CD8-positive, alpha-beta T cell (primary cell): ENCODE measurements at regions of chr3 and their contacts with region 1.

Region 1: DNA sequence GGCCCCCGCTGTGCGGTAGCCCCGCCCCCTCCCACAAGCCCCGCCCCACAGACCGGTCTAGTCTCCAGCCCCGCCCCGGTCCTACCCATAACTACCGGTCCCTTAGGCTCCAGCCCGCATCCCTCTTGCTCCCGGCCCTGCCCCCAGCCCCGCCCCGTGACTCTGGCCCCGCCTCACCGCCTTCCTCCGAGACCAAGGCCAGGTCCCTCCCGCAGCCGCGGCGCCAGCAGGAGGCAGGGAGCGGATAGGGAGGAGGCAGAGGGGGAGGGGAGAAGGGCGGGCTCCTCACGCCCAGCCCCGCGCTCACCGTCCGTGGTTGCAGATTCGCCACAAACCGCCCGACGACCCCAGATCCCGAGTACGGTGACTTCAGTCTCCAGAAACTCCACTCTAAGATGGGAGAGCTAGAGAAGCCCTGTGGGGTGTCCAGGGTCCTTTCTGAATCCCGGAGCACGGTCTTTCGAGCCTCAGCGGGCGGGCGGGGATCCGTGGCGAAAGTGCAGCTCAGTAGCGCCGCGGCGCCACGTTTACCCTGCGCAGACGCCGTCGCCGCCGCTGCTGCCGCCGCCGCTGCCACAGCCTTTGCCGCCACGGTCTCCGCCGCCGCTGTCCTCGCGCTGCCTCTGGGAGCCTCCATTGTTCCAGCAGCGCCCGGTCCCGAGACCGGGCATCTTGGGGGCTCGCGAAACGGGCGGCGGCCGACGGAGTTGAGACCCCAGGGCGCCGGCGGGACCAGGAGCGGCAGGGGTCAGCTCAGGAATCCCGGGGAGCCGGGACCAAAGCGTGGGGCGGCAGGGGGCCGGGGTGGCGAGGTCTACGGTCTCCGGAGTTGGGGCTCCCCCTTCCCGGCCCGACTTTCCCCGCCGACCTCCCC is at the start of gene BRPF1:
- DNase-seq: peak; percentile 98 to 100 (median 99)
- ATAC-seq: peak; percentile 94
- H3K4me3 ChIP-seq: peak within 1 kb of the TSS; percentile 91 to 92
- H3K4me3 Mint-ChIP-seq: peak within 1 kb of the TSS; percentile 91
- H3K27ac ChIP-seq: peak within 1 kb of the TSS; percentile 83 to 97
- H3K27ac Mint-ChIP-seq: peak within 1 kb of the TSS; percentile 93
- H3K4me1 ChIP-seq: peaks cover 48% of the 10 kb centered on the region
- H3K4me1 Mint-ChIP-seq: peaks cover 66% of the 10 kb centered on the region
- H3K27me3 ChIP-seq: no peaks in the 10 kb centered on the region
- H3K27me3 Mint-ChIP-seq: no peaks in the 10 kb centered on the region
- CTCF ChIP-seq: no peak
- total RNA-seq, gene BRPF1: 22.0 to 25.8 TPM

Region 2: DNA sequence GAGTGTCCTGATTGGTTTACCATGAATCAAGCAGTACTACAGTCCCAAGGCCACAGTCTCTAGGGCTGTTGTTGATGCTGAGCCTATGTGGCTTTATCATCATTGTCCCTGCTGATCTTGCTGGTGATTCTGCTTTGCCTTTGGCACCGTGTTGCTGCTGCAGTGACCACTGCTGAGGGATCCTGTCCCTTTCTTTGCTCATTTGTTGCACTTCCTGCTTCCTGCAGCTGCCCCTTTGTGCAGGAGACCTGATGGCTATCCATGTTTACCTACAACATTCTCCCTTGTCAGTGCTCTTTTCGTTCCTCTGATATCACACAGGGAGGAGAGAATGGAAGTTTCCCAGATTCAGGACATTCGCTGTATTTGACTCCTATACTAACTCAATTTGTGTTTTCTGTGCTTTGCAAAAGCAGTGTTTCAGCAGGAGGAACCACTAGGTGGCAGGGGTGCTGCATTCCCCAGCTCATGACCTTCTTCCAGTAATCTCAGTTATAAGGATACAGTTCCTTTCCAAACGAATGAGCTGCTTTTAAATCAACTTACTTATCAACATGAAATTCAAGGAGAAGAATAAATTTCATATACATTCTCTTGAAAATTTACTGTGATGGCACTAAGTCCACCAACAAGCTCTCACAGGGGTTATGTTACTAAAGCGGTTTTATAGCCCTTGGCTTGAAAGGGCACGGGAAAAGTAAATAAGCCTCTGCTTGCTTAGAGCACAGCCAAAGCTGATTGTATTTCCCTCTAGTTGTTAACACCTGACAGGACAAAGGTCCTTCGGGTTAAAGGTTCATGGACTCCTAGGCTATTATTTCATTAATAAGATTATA is 378.3 kb before region 1 on chr3:
- CTCF ChIA-PET with region 1: interaction called, 4 read pairs
- POLR2A ChIA-PET with region 1: no interaction called
- intact Hi-C with region 1: loop called (anchors 2 to 10 kb)
- DNase-seq: peak; percentile 22 to 77 (median 63)
- ATAC-seq: peak; percentile 88
- H3K4me3 ChIP-seq: no peak overlapping the region
- H3K4me3 Mint-ChIP-seq: no peak overlapping the region
- H3K27ac ChIP-seq: no peak overlapping the region
- H3K27ac Mint-ChIP-seq: no peak overlapping the region
- H3K4me1 ChIP-seq: no peaks in the 10 kb centered on the region
- H3K4me1 Mint-ChIP-seq: peaks cover 4% of the 10 kb centered on the region
- H3K27me3 ChIP-seq: no peaks in the 10 kb centered on the region
- H3K27me3 Mint-ChIP-seq: no peaks in the 10 kb centered on the region
- CTCF ChIP-seq: peak; percentile 98

Region 3: GRCh38 chr3:9649791-9650521 is 81.5 kb before region 1 on chr3:
- CTCF ChIA-PET with region 1: interaction called, 3 read pairs
- POLR2A ChIA-PET with region 1: interaction called, 16 read pairs
- intact Hi-C with region 1: loop called (anchors 1 kb)
- DNase-seq: peak in 2 of 9 experiments; percentile 10 to 42
- ATAC-seq: no peak
- H3K4me3 ChIP-seq: peak overlapping the region; percentile 90 to 91
- H3K4me3 Mint-ChIP-seq: peak overlapping the region; percentile 93
- H3K27ac ChIP-seq: peak overlapping the region; percentile 88 to 94
- H3K27ac Mint-ChIP-seq: peak overlapping the region; percentile 97
- H3K4me1 ChIP-seq: peaks cover 27% of the 10 kb centered on the region
- H3K4me1 Mint-ChIP-seq: peaks cover 39% of the 10 kb centered on the region
- H3K27me3 ChIP-seq: no peaks in the 10 kb centered on the region
- H3K27me3 Mint-ChIP-seq: no peaks in the 10 kb centered on the region
- CTCF ChIP-seq: no peak

Region 4: DNA sequence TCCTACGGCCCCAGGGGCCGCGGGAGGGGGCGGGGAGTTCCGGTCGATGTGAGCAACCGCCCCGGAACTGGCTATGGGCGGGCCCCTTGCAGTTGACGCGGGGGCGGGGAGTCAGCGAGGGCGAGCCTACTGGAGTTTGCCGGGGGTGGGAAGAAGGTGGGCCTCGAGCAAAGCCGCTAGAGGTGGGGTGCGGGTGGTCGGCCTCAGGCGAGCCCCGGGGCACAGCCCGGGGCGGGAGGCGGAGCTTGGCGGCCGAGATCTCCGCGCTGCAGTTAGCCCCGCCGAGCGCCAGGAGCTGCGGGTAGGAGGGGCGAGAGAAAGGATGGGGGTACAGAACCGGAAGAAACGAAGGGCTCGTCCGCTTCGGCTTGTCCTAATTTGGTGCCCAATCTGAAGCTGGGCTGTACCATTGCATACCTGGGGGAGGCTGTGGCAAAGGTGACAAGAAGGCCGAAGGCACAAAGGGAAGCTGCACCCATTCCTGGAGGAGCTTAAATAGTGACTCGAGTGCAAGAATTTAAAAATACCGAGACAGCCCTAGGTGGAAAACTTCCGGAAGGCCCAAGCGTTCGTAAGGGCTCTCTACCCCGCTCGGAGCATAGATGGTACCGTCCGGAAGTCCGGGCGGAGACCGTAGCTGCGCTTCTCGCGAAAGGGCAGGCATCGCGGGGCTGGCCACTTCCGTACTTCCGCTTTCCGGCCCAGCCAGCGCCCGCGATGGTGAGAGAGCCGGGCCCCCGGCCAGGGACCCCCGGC is 61.1 kb after region 1 on chr3 and contains the starts of genes ARPC4 and TADA3:
- CTCF ChIA-PET with region 1: interaction called, 9 read pairs
- POLR2A ChIA-PET with region 1: interaction called, 14 read pairs
- intact Hi-C with region 1: loop called (anchors 1 kb)
- DNase-seq: peak; percentile 82 to 97 (median 92)
- ATAC-seq: peak; percentile 83
- H3K4me3 ChIP-seq: peak within 1 kb of the TSS; percentile 76 to 96
- H3K4me3 Mint-ChIP-seq: peak within 1 kb of the TSS; percentile 94
- H3K27ac ChIP-seq: peak within 1 kb of the TSS; percentile 93 to 98
- H3K27ac Mint-ChIP-seq: peak within 1 kb of the TSS; percentile 98
- H3K4me1 ChIP-seq: peaks cover 48% of the 10 kb centered on the region
- H3K4me1 Mint-ChIP-seq: peaks cover 58% of the 10 kb centered on the region
- H3K27me3 ChIP-seq: no peaks in the 10 kb centered on the region
- H3K27me3 Mint-ChIP-seq: no peaks in the 10 kb centered on the region
- CTCF ChIP-seq: no peak
- total RNA-seq, gene ARPC4: 97.7 to 104 TPM
- total RNA-seq, gene TADA3: 9.5 to 11.0 TPM

Region 5: GRCh38 chr3:10322352-10322710 is 590.9 kb after region 1 on chr3:
- CTCF ChIA-PET with region 1: no interaction called
- POLR2A ChIA-PET with region 1: interaction called, 3 read pairs
- intact Hi-C with region 1: loop called in 1 of 2 experiments (anchors 5 kb)
- DNase-seq: peak in 2 of 9 experiments; percentile 37 to 47
- ATAC-seq: no peak
- H3K4me3 ChIP-seq: no peak overlapping the region
- H3K4me3 Mint-ChIP-seq: peak overlapping the region; percentile 18
- H3K27ac ChIP-seq: no peak overlapping the region
- H3K27ac Mint-ChIP-seq: no peak overlapping the region
- H3K4me1 ChIP-seq: peaks cover 16% of the 10 kb centered on the region
- H3K4me1 Mint-ChIP-seq: peaks cover 29% of the 10 kb centered on the region
- H3K27me3 ChIP-seq: no peaks in the 10 kb centered on the region
- H3K27me3 Mint-ChIP-seq: peaks cover 3% of the 10 kb centered on the region
- CTCF ChIP-seq: peak; percentile 31